H1 (cell line): ENCODE measurements at regions of chr11 and their contacts with region 1.

Region 1: DNA sequence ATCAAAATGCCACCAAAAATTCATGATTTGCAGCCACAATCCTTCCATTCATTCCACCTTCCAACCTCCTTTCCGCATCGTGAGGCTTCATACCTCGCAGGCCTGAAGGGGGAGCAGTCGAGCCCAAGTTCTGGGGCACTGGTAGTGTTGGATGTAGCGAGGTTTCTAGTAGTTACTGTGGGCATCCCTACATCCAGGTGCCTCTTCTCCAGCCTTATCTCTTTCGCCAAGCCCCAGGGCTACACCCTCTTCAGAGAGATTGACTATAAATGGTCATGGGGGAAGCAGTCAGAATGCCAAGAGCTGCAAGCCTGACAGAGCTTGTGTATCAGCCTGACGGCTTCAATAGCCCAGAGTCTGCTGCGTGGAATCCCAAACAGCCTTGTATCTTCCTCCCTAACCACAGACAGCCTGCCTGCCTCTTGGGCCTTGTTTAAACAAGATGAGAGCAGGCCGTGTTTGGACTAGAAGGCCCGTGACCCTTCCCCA is 28.9 kb downstream of the CLMP start:
- DNase-seq: peak; percentile 43 to 88
- H3K4me3 ChIP-seq: no peak overlapping the region
- H3K27ac ChIP-seq: no peak overlapping the region
- H3K4me1 ChIP-seq: peaks cover 0 to 5% (median 2%) of the 10 kb centered on the region in 4 experiments; a peak in 3 of 7 replicates
- H3K27me3 ChIP-seq: no peaks in the 10 kb centered on the region
- CTCF ChIP-seq: peak; percentile 78 to 96 (median 93)
- EP300 ChIP-seq: no peak
- POLR2A ChIP-seq: no peak
- RAD21 ChIP-seq: peak; percentile 72 to 78

Region 2: DNA sequence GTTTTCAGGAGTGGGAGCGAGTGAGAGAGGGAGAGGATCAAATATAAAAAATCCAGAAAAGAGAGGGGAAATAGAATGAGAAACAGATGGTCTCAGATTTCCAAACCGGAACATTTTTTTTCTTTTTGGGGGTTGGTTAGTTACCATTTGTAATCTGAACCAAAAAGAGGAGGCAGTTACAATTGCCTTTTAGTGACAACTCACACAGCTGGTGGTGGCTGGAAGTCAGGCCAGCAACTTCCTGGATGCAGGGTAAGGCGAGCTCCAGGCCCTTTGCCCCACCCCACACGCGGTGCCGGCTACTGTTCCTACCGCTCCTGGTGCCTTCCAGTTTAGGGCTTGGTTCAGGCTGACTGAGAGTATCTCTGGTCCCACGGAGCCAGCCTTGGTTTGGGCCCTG is 531.6 kb before region 1 on chr11:
- CTCF ChIA-PET with region 1: no interaction called
- POLR2A ChIA-PET with region 1: no interaction called
- DNase-seq: peak in 1 of 2 experiments; percentile 68
- H3K4me3 ChIP-seq: no peak overlapping the region
- H3K27ac ChIP-seq: no peak overlapping the region
- H3K4me1 ChIP-seq: 0 out of 7 replicates have a peak, but pooled peaks cover 0 to 2% (median 0%) of the 10 kb centered on the region in 4 experiments
- H3K27me3 ChIP-seq: no peaks in the 10 kb centered on the region
- CTCF ChIP-seq: no peak
- EP300 ChIP-seq: no peak
- POLR2A ChIP-seq: no peak
- RAD21 ChIP-seq: no peak

Region 3: DNA sequence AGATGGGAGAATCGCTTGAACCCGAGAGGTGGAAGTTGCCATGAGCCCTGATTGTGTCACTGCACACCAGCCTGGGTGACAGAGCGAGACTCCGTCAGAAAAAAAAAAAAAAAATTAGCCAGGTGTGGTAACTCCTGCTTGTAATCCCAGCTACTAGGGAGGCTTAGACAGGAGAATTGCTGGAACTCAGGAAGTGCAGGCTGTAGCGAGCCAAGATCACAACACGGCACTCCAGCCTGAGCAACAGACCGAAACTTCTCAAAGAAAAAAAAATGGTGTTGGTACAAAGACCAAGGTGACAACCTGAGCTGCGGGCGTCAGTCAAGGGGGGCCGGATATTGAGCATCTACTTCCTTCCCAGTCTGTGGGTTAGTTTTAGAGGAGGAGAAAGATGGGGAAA is 55.8 kb before region 1 on chr11:
- CTCF ChIA-PET with region 1: interaction called, 46 read pairs
- POLR2A ChIA-PET with region 1: interaction called, 3 read pairs
- DNase-seq: no peak
- H3K4me3 ChIP-seq: no peak overlapping the region
- H3K27ac ChIP-seq: no peak overlapping the region
- H3K4me1 ChIP-seq: no peaks in the 10 kb centered on the region
- H3K27me3 ChIP-seq: no peaks in the 10 kb centered on the region
- CTCF ChIP-seq: no peak
- EP300 ChIP-seq: no peak
- POLR2A ChIP-seq: no peak
- RAD21 ChIP-seq: no peak

Region 4: GRCh38 chr11:123152956-123153355 is 13.2 kb before region 1 on chr11:
- CTCF ChIA-PET with region 1: interaction called, 48 read pairs
- POLR2A ChIA-PET with region 1: interaction called, 3 read pairs
- DNase-seq: no peak
- H3K4me3 ChIP-seq: no peak overlapping the region
- H3K27ac ChIP-seq: no peak overlapping the region
- H3K4me1 ChIP-seq: 0 out of 7 replicates have a peak, but pooled peaks cover 0 to 2% (median 0%) of the 10 kb centered on the region in 4 experiments
- H3K27me3 ChIP-seq: no peaks in the 10 kb centered on the region
- CTCF ChIP-seq: no peak
- EP300 ChIP-seq: no peak
- POLR2A ChIP-seq: no peak
- RAD21 ChIP-seq: no peak

Region 5: DNA sequence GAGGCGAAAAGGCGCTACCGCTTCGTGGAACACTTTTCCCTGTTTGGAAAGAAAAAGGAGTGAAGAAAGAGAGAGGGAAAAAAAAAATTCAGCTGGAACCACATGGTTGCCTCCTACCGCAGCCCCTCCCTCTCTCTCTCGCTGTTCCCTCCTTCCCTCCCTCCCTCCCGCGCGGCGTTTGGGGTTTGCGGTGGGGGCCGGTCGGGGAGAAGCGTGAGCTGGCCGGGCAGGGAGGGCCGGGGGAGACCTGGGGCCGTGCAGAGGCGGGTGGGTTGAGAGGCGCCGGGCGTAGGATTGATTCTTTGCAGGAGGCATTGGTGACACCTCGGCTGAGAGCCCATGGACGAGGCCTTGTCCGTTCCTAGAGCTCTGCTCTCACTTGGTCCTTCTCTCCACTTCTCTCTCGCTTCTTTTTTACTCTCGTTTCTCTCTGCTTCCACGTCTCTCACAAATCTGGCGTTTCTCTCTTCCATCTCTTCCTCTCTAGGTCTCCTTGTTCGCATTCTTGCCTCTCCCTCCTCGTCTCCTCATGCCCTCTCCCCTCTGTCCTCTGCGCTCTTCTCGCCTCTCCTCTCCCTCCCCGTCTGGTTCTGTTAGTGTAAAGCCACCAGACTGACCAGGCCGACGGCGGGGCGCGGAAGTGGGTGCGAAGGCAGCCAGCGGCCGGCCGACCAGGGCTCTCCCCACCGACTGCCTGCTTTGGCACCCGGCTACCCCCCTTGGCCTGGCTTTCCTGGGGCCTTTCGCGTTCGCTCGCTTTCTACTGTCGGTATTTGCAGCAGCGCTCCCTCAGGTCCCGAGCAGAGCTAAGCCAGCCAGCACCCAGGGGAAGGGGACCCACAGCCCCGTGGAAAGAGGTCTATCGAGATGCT is 29.3 kb after region 1 on chr11 and contains the start of gene CLMP:
- CTCF ChIA-PET with region 1: interaction called, 10 read pairs
- POLR2A ChIA-PET with region 1: interaction called, 7 read pairs
- DNase-seq: peak in 1 of 2 experiments; percentile 83
- H3K4me3 ChIP-seq: peak within 1 kb of the TSS; percentile 53 to 76 (median 69)
- H3K27ac ChIP-seq: peak within 1 kb of the TSS; percentile 54; the same call in 1 of the 2 replicates
- H3K4me1 ChIP-seq: peaks cover 4 to 29% (median 19%) of the 10 kb centered on the region in 4 experiments
- H3K27me3 ChIP-seq: peaks cover 0 to 6% (median 3%) of the 10 kb centered on the region in 4 experiments; a peak in 4 of 7 replicates
- CTCF ChIP-seq: no peak
- EP300 ChIP-seq: peak in 1 of 2 experiments; percentile 90; a peak in 1 of 3 replicates
- POLR2A ChIP-seq: peak; percentile 26 to 40; a peak in 1 of 3 replicates
- RAD21 ChIP-seq: no peak
- total RNA-seq, gene CLMP: 20.8 and 24.1 TPM in 2 replicates

Region 6: DNA sequence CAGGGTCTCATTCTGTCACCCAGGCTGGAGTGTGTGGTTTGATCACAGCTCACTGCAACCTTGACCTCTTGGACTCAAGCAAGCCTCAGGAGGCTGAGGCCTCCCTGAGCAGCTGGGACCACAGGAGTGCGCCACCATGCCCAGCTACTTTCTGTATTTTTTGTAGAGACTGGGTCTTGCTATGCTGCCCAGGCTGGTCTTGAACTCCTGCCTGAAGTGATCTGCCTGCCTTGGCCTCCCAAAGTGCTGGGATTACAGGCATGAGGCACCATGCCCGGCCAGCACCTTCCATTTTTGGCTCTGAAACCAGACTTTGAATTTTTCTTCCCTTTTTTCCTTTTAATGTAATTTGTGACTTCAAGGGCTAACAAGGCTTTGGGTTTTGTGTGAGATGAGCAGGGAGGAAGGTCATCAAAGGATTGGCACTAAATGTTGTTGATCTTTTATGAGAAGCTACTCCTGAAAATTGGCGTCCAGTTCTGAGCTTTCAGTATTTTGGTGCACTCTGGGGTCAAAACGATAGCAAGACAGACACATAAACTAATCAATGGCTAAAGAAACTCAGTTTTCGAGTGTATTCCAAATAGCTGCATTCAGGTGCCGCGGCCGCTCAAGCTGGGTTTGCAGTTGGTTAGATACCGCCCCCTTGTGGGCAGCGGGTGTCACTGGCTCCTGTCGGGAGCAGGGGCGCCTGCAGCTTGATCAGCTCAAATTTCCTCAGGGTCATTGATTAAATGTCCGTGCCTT is 80.8 kb after region 1 on chr11:
- CTCF ChIA-PET with region 1: interaction called, 170 read pairs
- POLR2A ChIA-PET with region 1: interaction called, 4 read pairs
- DNase-seq: peak; percentile 61 to 92
- H3K4me3 ChIP-seq: no peak overlapping the region
- H3K27ac ChIP-seq: no peak overlapping the region
- H3K4me1 ChIP-seq: peaks cover 0 to 5% (median under 1%) of the 10 kb centered on the region in 4 experiments; a peak in 2 of 7 replicates
- H3K27me3 ChIP-seq: no peaks in the 10 kb centered on the region
- CTCF ChIP-seq: peak; percentile 94 to 98 (median 95)
- EP300 ChIP-seq: no peak
- POLR2A ChIP-seq: no peak
- RAD21 ChIP-seq: peak; percentile 99